Dorsolateral prefrontal cortex (tissue), 120 donors: ENCODE measurements at regions of chr18 and their contacts with region 1.

Region 1: GRCh38 chr18:76398896-76399612 is 96.0 kb downstream of the ZNF516 start:
- DNase-seq: peak; percentile 71 to 94 (median 90)
- H3K4me3 ChIP-seq: peak overlapping the region in 1 of 59 donors; percentile 9
- H3K27ac ChIP-seq: peak overlapping the region in 1 of 59 donors; percentile 3
- H3K27me3 ChIP-seq: no peaks in the 10 kb centered on the region
- CTCF ChIP-seq: peak; percentile 93 to 100 (median 97)

Region 2: GRCh38 chr18:76435316-76435989 is 36.4 kb after region 1 on chr18:
- intact Hi-C with region 1: no loop called
- DNase-seq: no peak
- H3K4me3 ChIP-seq: no peak overlapping the region
- H3K27ac ChIP-seq: no peak overlapping the region
- H3K27me3 ChIP-seq: peaks cover 0 to 6% (median 0%) of the 10 kb centered on the region in 45 donors
- CTCF ChIP-seq: peak in 8 of 56 donors; percentile 12 to 35 (median 16)

Region 3: GRCh38 chr18:76495435-76496199 is 96.6 kb after region 1 on chr18:
- intact Hi-C with region 1: no loop called
- DNase-seq: peak in 1 of 10 donors; percentile 17
- H3K4me3 ChIP-seq: peak overlapping the region; percentile 41 to 81 (median 63)
- H3K27ac ChIP-seq: peak overlapping the region in 51 of 59 donors; percentile 0 to 88 (median 63)
- H3K27me3 ChIP-seq: peaks cover 0 to 39% (median 5%) of the 10 kb centered on the region in 45 donors
- CTCF ChIP-seq: no peak

Region 4: GRCh38 chr18:76619621-76620315 is 220.7 kb after region 1 on chr18:
- intact Hi-C with region 1: loop called in 1 of 2 experiments (anchors 5 kb)
- DNase-seq: peak in 5 of 10 donors; percentile 24 to 45 (median 36)
- H3K4me3 ChIP-seq: peak overlapping the region in 58 of 59 donors; percentile 4 to 65 (median 43)
- H3K27ac ChIP-seq: peak overlapping the region in 55 of 59 donors; percentile 5 to 85 (median 68)
- H3K27me3 ChIP-seq: peaks cover 0 to 8% (median 0%) of the 10 kb centered on the region in 45 donors
- CTCF ChIP-seq: no peak

Region 5: GRCh38 chr18:76686737-76687262 is 287.7 kb after region 1 on chr18:
- intact Hi-C with region 1: loop called in 1 of 2 experiments (anchors 5 kb)
- DNase-seq: peak in 7 of 10 donors; percentile 14 to 76 (median 57)
- H3K4me3 ChIP-seq: no peak overlapping the region
- H3K27ac ChIP-seq: peak overlapping the region in 2 of 59 donors; percentile 37 to 45
- H3K27me3 ChIP-seq: peaks cover 0 to 41% (median 0%) of the 10 kb centered on the region in 45 donors
- CTCF ChIP-seq: peak; percentile 30 to 76 (median 58)

Region 6: DNA sequence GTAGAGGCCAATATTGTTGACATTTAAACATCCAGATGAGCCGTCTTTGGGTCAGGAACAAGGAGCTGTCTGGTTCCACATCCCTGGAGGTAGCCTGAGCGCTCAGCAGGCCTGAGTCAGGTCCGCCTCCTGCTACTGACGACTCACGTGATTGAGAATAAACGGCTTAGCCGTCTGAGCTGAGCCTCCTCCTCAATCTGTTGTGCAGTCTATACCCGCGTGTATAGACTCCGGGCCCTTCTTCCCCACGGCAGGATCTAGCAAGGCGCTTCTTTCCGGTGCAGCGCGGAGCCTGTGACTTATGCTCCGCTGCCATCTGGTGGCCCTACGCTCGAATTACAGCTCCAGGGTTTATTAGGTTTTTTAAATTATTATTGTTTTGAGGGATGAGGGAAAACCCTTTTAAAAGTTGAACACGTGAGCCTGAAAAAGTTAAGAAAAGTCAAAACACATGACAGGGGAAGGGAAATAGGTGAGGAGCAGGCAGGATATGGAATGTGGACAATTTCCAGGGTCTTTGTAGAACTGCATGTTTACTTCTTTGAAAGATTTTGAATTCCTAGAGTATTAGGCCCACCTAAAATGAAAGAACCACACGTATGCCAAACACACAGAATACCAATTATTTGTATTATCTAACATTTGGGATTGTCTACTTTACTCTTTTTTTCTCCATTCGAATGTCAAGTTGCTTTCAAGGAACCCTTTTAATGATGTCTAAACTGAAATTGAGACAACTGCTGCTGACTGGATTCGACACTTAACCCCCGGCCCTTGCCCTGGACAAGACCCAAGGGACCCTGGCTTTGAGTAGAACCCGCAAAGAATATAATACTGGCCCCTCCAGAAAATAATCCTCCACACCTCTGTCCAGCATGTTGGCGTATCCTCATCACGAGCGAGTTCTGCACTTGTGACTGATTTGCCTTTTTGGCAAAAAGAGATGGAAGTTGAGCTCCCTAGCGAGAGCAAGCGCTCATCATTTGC is 310.9 kb after region 1 on chr18:
- intact Hi-C with region 1: loop called in 1 of 2 experiments (anchors 1 kb)
- DNase-seq: peak; percentile 36 to 74 (median 67)
- H3K4me3 ChIP-seq: peak overlapping the region in 20 of 59 donors; percentile 2 to 47 (median 29)
- H3K27ac ChIP-seq: no peak overlapping the region
- H3K27me3 ChIP-seq: peaks cover 0 to 3% (median 0%) of the 10 kb centered on the region in 45 donors
- CTCF ChIP-seq: peak; percentile 74 to 96 (median 86)